Activated B cell treated with CpG ODN at 0.5 μM for 24 hours (primary cell): ENCODE measurements at regions of chr5 and their contacts with region 1.

Region 1: DNA sequence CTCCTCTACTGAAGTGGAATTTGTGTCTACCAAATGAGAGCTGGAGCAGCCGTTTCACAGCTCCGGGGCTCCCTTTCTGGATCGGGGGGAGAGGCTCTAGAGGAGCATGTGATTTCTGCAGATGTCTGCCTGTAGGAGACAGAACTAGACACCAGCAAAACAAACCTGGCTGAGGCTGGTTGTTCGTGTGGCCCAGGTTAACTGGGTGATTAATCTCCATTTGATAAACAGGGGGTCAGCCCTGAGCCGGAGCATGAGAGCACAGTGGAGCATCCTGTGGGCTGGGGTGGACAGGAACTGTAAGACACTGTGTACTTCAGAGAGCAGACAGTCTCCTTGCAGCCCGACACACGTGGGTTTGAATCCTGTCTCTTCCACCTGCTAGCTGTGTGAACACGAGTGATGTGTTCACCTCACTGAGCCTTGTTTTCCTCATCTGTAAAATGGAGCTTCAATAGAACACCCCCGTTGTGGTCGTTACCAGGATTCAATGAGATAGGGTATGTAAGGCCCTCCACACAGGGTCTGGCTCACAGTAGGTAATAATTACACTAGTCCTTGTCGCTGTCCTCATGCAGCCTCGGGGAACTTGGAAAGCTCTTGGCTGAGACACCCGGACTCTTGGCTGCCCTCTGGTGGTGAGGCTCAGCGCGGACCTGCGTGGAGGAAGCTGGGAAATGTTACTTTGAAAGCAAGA is 12.9 kb downstream of the CXCL14 start:
- DNase-seq: peak; percentile 42
- ATAC-seq: no peak
- H3K4me3 Mint-ChIP-seq: no peak overlapping the region
- H3K27ac Mint-ChIP-seq: no peak overlapping the region
- H3K4me1 Mint-ChIP-seq: no peaks in the 10 kb centered on the region
- H3K27me3 Mint-ChIP-seq: peaks cover 19% of the 10 kb centered on the region
- CTCF ChIP-seq: peak; percentile 22

Region 2: GRCh38 chr5:135457424-135458071 is 108.3 kb before region 1 on chr5:
- CTCF ChIA-PET with region 1: interaction called, 19 read pairs
- POLR2A ChIA-PET with region 1: no interaction called
- intact Hi-C with region 1: loop called (anchors 1 kb)
- DNase-seq: peak; percentile 27
- ATAC-seq: peak; percentile 42
- H3K4me3 Mint-ChIP-seq: no peak overlapping the region
- H3K27ac Mint-ChIP-seq: no peak overlapping the region
- H3K4me1 Mint-ChIP-seq: no peaks in the 10 kb centered on the region
- H3K27me3 Mint-ChIP-seq: peaks cover 24% of the 10 kb centered on the region
- CTCF ChIP-seq: no peak

Region 3: GRCh38 chr5:135466178-135467050 is 99.5 kb before region 1 on chr5:
- CTCF ChIA-PET with region 1: interaction called, 40 read pairs
- POLR2A ChIA-PET with region 1: no interaction called
- intact Hi-C with region 1: loop called (anchors 1 kb)
- DNase-seq: peak; percentile 52
- ATAC-seq: peak; percentile 66
- H3K4me3 Mint-ChIP-seq: peak overlapping the region; percentile 64
- H3K27ac Mint-ChIP-seq: no peak overlapping the region
- H3K4me1 Mint-ChIP-seq: peaks cover 6% of the 10 kb centered on the region
- H3K27me3 Mint-ChIP-seq: peaks cover 39% of the 10 kb centered on the region
- CTCF ChIP-seq: no peak

Region 4: DNA sequence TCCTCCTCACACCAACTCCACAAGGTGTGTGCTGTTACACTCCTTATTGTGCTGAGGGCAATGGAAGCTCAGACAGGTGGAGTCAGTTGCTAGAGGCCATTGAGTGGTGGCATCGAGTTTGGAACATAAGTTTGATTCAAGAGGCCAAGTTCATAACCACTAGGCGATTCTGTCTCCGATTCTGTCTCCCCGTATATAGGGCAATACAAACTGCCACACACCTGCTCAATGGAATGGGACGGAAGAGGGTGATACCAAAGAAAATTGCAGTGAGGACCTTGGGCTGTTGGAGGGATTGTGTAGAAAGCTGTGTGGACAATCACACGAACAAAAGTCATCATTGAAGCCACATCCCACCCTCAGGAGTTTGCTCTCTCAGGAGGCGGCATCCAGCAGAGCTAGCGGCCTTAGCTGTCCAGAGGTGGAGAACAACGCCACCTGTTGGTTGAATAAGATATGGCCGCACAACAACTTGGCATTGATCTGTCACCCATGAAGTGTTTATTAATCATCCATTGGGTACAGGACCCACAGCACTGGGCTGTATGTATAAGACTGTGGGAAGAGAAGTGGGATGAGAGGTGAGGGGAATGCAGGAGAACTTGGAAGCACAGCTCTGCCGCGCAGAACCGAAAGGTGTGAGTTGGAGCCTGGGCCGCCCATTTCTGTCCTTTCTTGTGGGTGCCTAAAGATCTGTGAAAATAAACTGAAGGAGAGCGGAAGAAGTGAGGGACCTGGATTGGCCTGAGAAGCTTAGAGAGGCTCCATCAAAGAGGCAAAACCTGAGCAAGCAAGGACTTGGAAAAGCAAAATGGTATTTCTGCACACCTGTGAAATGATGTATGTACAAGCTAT is 14.1 kb before region 1 on chr5:
- CTCF ChIA-PET with region 1: interaction called, 14 read pairs
- POLR2A ChIA-PET with region 1: no interaction called
- intact Hi-C with region 1: no loop called
- DNase-seq: no peak
- ATAC-seq: peak; percentile 34
- H3K4me3 Mint-ChIP-seq: no peak overlapping the region
- H3K27ac Mint-ChIP-seq: no peak overlapping the region
- H3K4me1 Mint-ChIP-seq: no peaks in the 10 kb centered on the region
- H3K27me3 Mint-ChIP-seq: peaks cover 51% of the 10 kb centered on the region
- CTCF ChIP-seq: no peak

Region 5: DNA sequence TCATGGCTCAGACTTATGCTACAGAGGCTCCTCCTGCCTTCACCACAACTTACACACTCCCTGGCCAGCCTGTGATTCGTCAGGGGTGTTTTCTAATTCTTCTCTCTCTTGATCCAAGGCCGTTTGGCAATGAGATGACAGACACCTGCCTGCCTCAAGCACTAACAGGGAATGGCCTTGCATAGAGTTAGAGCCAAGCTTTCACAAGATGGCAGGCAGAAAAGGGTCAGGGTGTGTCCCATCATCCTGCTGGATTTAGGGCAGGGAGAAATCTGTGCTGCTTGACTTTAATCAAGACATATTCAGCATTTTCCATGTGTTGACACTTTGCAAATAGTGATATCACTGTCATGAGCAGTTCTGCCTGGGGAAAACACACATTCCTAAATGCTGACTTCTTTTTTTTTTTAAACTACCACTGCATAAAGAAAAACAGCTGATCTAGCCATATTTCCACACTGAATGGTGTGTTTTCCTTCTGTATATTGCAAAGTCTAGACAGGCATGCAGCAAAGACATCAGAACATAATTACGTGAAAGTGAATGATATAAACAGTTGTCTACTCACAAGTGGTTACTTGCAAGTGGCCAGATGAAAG is 173.6 kb after region 1 on chr5:
- CTCF ChIA-PET with region 1: no interaction called
- POLR2A ChIA-PET with region 1: no interaction called
- intact Hi-C with region 1: no loop called
- DNase-seq: no peak
- ATAC-seq: no peak
- H3K4me3 Mint-ChIP-seq: no peak overlapping the region
- H3K27ac Mint-ChIP-seq: no peak overlapping the region
- H3K4me1 Mint-ChIP-seq: no peaks in the 10 kb centered on the region
- H3K27me3 Mint-ChIP-seq: peaks cover 3% of the 10 kb centered on the region
- CTCF ChIP-seq: no peak

Region 6: GRCh38 chr5:135843571-135844337 is 277.9 kb after region 1 on chr5:
- CTCF ChIA-PET with region 1: no interaction called
- POLR2A ChIA-PET with region 1: no interaction called
- intact Hi-C with region 1: no loop called
- DNase-seq: no peak
- ATAC-seq: no peak
- H3K4me3 Mint-ChIP-seq: no peak overlapping the region
- H3K27ac Mint-ChIP-seq: no peak overlapping the region
- H3K4me1 Mint-ChIP-seq: no peaks in the 10 kb centered on the region
- H3K27me3 Mint-ChIP-seq: peaks cover 8% of the 10 kb centered on the region
- CTCF ChIP-seq: no peak